GM10248 (cell line): ENCODE measurements at regions of chr17 and their contacts with region 1.

Region 1: DNA sequence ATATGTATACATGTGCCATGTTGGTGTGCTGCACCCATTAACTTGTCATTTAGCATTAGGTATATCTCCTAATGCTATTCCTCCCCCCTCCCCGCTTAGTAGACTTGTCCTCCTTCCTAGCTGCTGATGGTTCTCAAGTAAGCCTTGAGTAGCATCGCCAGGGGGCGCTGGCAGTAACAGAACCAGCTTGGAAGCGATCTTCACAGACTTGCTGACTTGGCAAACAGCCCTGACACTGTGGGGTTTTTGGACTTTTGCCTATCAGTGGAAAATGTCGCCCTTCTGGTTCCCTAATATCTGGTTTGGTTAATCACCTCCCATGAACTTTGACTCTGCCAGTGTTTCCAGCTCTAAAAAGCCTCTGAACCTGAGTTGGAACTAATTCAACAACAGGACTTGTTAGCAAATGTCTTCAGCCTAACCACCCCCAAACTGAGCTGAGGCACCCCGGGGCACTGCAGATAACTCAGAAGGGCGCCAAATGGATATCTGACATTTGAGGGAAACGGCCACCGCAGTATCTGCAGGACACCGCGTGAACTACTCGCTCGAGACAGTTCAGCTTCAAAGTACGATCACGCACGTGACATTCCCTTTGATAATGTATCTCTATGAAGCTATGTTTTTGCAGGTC is 15.4 kb upstream of the SPATA32 start:
- DNase-seq: peak; percentile 86
- CTCF ChIP-seq: peak; percentile 82

Region 2: DNA sequence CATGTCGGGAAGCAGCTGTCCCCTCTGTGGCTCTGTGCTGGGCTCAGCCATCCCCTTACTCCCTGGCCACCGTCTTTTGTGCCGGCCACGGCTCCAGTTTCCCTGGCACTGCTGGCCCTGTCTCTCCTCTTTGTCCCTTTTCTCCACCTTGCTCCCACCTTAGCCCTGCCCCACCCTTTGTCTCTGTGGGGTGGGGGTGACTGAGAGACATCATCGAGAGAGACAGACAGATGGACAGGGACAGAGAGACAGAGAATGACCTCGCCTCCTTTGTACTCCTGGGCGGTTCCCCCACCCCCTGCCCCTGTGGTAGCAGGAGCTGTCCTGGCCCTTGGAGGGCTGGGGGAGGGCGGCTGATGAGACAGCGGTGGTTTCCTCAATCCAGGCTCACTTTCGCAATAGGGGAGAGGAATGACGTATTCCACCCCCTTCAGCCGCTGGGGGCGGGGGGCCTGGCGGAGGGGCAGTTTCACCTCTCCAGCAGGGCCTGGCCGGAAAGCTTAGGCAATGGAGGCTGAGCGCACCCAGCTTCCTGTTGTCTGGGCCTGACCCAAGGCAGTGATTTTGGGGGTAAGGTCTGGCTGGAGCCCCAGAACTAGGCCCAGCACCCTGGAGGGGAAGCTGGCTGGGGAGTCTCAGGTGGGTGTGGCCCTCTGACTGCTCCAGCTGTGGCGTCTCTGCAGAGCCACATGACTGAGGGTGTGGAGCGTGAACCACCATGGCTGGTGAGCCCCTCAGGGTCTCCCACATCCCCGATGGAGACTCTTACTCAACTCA is 48.4 kb before region 1 on chr17:
- CTCF ChIA-PET with region 1: interaction called, 14 read pairs
- POLR2A ChIA-PET with region 1: no interaction called
- DNase-seq: peak; percentile 86
- CTCF ChIP-seq: no peak

Region 3: DNA sequence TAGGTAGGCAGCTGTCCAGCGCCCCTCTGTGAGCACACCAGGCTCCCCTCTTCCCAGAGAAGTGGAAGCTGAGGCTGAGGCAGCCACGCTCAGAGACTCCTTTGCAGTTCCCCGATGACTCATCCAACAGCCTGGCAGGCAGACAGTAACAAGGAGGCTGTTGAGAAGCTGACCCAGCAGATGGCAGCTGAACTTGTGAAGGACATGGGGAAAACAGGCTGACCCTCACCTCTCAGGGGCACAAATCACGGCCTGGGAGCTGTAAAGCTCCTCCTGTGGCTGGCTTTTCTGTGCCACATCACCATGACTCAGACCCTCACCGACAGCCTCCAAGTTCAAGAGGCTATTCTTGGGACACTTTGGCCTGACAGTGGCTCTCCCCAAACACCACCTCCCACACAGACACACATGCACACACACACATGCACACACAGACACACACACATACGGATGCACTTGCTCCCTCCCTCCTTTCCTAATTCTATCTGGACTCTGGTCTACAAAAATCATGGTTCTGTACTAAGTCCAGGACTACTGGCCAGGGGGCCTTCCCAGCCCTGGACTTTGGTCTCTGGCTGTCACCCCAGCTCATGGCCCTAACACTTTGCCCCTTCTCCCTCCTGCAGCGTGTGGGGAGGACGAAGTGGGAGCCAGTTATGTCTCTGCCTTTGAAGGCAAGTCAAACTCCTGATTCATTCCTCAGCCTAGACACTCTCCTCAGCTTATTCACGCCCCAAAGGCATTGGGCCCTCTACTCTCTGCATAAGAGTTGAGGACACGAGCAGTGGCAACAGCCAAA is 16.3 kb after region 1 on chr17:
- CTCF ChIA-PET with region 1: interaction called, 45 read pairs
- POLR2A ChIA-PET with region 1: no interaction called
- DNase-seq: no peak
- CTCF ChIP-seq: no peak

Region 4: DNA sequence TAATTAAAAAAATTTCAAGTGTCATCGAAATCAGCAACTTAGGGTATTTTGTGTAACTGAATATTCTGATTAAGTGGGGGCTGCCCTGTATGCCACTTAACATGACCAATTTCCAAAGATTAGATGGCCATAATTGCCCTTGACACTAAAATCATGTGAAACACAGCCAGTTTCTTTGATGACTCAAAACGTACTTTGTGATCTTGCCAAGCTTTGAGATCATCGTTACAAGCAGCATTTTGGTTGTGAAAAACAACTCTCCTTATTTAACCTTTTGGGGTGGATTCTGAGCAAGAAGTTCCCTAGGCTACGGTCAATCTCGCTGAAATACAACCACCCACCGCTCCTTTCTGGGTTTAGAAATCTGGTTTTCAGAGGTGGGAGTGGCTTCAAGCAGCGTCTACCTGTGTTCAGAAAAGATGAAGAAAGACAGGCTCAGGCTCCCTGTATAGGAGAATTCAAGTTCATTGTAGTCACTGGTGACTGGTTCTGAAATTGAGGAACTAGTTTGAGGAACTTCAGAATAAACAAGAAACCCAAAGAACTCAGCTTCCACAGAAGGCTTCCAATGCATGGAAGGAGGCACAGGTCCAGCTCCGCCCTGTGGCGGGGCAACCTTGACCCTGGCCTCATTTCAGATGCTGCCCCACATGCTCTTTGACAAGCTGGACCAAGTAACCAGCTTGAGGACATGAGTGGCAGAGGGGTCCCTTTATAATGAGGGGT is 30.1 kb after region 1 on chr17:
- CTCF ChIA-PET with region 1: interaction called, 37 read pairs
- POLR2A ChIA-PET with region 1: interaction called, 6 read pairs
- DNase-seq: peak; percentile 66
- CTCF ChIP-seq: no peak

Region 5: DNA sequence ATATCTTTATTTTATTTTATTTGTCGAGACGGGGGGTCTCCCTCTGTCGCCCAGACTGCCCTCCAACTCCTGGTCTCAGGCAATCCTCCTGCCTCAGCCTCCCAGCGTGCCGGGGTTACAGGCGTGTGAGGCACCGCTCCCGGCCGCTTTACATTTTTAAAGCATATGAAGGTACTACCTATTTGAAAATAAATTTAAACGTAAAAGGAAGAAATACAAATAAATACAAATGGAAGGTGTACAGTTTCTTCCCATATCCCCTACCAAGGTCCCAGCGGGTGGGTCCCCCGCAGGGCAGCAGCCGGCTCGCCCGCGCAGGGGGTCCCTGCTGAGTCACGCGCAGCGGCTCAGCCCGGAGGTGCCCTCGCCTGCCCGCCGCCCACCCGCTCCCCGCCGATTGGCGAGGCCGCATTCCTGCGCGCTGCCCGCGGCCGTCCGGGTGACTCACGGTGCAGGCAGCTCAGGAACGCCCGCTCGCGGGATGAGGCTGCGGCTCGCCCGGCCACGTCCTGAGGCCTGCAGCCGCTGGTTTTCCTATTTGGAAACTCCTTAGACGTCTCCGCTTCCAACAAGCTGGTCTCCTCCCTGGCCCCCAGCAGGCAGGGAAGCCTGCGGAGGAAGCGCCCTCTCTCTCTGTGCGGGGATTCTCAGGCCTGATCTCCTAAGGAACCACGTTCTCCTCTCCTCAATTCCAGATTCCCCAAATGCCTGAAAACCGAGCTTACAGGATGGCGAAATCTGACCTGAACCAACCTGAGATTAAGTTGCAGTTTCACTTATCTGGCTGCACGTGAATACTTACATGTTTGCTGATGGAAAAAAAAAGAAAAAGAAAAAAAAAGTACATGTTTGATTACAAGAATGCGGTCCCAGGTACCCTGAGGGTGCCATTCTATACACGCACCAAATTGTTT is 94.3 kb after region 1 on chr17:
- CTCF ChIA-PET with region 1: interaction called, 21 read pairs
- POLR2A ChIA-PET with region 1: no interaction called
- DNase-seq: no peak
- CTCF ChIP-seq: no peak

Region 6: DNA sequence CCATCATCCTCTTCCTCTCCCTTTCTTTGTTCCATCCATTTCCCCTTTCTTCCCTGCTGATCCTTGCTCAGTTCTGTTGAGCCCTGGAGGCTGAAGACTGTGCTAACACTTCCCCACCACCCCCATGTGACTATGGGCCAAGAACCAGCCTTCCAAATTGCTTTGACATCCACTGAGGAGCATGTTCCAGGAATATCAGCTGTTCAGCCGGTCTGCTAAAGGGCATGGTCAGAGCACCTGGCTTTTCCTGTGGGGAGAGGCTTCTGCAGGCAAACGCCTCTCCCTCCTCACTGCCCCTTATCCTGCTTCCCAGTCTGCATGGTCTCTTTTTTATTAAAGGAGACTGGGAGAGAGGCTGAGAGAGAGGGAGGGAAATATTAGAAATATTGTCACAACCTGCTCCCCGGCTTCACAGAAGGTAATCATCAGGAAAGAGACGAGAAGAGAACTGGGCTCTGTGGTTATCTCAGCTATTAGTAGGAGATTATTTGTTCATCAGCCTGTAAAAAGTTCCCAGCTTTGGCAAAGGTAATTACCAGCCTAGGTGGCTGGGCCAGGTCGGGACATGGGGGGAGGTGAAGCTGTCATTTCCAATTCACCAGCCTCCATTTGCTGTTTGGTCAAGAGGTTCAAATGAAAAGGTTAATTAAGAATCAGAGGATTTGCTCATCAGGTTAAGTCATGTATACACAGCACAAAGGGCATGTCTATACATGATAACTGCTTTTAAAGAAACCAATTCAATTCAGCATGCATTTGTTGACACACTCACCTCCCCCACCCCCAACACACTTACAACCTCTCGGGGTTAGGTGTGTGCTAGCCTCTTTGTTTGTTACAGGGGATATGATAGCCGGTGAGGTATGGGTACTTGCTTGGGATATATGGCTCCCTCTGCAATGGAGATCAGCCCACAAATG is 423.1 kb after region 1 on chr17:
- CTCF ChIA-PET with region 1: no interaction called
- POLR2A ChIA-PET with region 1: no interaction called
- DNase-seq: no peak
- CTCF ChIP-seq: no peak

Region 7: DNA sequence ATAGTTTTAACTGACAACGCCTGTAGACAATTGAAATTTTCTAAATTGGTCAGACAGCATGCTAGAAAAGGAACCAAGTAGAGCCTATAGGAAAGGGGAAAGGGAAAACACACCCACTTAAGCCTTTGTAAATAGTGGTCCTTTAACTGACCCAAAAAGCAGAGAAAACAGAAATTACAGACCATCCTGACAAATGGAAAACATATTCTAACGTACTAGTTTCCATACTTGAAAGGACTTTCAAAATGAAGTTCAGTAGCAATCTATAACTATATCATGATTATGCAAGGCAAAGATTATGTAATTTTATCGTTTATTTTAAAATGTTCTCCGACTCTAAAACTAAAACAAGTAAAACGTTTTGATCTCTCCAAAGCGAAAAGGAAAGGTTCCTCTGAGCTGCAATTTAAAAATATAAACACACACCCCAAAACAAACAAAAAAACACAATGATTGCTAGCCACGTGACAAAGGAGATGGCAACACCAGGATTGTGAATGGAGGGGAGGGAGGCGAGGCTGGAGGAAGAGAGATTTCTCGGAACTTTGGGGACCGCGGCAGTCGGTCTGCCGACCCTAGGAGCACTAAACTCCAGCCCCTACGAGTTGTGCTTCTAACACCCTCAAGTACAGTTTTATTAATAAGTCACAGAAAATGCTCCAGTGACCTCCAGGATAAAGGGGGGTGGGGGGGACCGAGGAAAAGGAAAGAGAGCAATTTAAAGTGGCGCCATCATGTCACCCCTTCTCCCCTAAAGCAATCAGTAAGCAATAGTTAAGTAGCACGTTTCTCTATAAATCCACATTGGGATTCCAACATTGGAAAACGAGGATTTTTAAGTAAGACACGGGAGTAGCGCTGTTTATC is 914.2 kb after region 1 on chr17:
- CTCF ChIA-PET with region 1: no interaction called
- POLR2A ChIA-PET with region 1: no interaction called
- DNase-seq: peak; percentile 34
- CTCF ChIP-seq: no peak